BJ (cell line): ENCODE measurements at regions of chr16 and their contacts with region 1.

Region 1: DNA sequence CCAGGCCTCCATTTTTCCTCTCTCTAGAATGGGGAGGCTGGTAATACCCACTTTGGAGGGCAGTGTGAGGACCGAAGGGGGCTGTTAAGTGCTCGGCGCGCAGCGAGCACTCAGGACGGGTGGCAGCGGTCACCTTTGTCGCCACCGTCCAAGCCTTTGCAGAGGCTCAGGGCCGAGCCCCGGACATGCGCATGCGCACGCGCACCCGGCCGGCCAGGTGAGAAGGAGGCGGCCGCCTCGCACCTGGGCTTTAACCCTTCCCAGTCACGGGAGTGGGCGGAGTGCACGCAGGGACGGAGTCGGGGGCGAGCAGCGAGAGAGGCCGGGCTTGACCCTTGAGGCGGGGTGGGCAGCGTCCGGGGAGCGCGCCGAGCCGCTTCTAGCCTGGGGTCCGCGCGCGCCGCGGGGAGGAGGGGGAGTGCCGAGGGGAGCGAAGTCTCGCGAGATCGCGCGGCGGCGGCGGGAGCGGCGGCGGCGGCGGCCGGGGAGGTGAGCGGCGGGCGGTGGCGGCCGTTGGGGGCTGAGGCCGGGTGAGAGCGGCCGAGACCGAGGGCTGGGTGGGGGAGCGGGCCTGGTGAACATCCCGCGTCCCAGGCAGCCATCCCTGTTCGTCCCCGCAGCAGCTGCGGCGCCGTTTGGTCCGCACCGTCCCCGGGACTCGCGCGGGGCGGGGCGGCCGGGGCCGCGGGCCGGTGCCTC is at the start of gene MRTFB:
- DNase-seq: no peak
- H3K4me3 ChIP-seq: peak within 1 kb of the TSS; percentile 93
- H3K27me3 ChIP-seq: no peaks in the 10 kb centered on the region
- CTCF ChIP-seq: no peak
- polyA plus RNA-seq, gene MRTFB: 6.0 and 6.2 TPM in 2 replicates

Region 2: GRCh38 chr16:13961099-13961811 is 109.8 kb before region 1 on chr16:
- CTCF ChIA-PET with region 1: no interaction called
- POLR2A ChIA-PET with region 1: no interaction called
- DNase-seq: no peak
- H3K4me3 ChIP-seq: no peak overlapping the region
- H3K27me3 ChIP-seq: peaks cover 2% of the 10 kb centered on the region; the same call in 1 of the 2 replicates
- CTCF ChIP-seq: no peak

Region 3: GRCh38 chr16:14105760-14106375 is 34.8 kb after region 1 on chr16:
- CTCF ChIA-PET with region 1: no interaction called
- POLR2A ChIA-PET with region 1: interaction called, 11 read pairs
- DNase-seq: no peak
- H3K4me3 ChIP-seq: no peak overlapping the region
- H3K27me3 ChIP-seq: no peaks in the 10 kb centered on the region
- CTCF ChIP-seq: no peak